ENCODE measurements at regions of chr2 and their contacts with region 1.

Region 1: DNA sequence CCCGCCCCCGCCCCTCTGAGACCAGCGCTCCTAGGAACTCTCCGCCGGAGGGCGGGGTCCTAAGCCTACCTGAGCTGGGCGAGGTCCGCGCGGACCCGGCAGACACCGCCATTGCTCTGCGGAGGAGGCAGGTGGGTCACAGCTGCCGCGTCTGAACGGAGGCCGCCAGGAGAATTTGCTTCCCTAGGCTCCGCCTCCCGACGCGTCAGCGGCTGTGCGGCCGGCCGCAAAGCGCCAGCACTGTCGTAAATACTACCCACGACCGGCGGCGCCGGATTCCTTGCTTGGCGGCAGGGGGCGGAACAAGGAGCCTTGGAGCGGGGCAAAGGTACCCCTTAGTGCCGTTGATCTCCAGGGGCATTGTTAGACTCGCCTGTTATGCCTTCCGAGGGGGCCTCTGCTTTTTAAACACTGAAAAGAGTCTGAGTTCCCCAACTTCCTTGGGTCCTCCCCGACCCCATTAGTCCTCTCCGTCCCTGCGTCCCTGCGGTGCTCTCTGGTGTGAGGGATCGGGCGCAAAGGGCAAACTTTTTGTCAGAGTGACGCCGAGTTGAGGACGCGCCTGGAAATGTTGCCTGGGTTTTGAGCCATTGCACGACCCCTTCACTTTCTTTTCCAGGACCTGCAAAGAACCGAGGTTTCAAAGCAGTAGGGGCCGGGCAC is at the start of gene GGCX:
- DNase-seq: peak; percentile 96 to 98 (median 97)
- ATAC-seq: peak; percentile 95 to 97 (median 96)
- H3K4me3 ChIP-seq: peak within 1 kb of the TSS; percentile 62 to 93 (median 79)
- H3K27ac ChIP-seq: peak within 1 kb of the TSS; percentile 56 to 96 (median 89)
- H3K4me1 ChIP-seq: peaks cover 0 to 32% (median 14%) of the 10 kb centered on the region in 12 donors
- H3K27me3 ChIP-seq: no peaks in the 10 kb centered on the region
- CTCF ChIP-seq: peak in 6 of 12 donors; percentile 12 to 62 (median 30)
- POLR2A ChIP-seq: peak in 1 of 2 donors; percentile 91
- total RNA-seq, gene GGCX: 13.2 to 30.7 (median 20.8) TPM

Region 2: GRCh38 chr2:84999553-84999955 is 561.9 kb before region 1 on chr2:
- intact Hi-C with region 1: no loop called
- DNase-seq: no peak
- ATAC-seq: no peak
- H3K4me3 ChIP-seq: no peak overlapping the region
- H3K27ac ChIP-seq: no peak overlapping the region
- H3K4me1 ChIP-seq: peaks cover 0 to 73% (median 49%) of the 10 kb centered on the region in 12 donors
- H3K27me3 ChIP-seq: no peaks in the 10 kb centered on the region
- CTCF ChIP-seq: no peak
- POLR2A ChIP-seq: no peak

Region 3: GRCh38 chr2:85538486-85539360 is 22.7 kb before region 1 on chr2 and contains the start of gene MAT2A:
- intact Hi-C with region 1: loop called in 1 of 10 experiments (anchors 2 kb)
- DNase-seq: peak; percentile 95 to 96 (median 96)
- ATAC-seq: peak; percentile 87 to 90 (median 89)
- H3K4me3 ChIP-seq: peak within 1 kb of the TSS; percentile 59 to 98 (median 90)
- H3K27ac ChIP-seq: peak within 1 kb of the TSS; percentile 94 to 100 (median 99)
- H3K4me1 ChIP-seq: peaks cover 0 to 55% (median 38%) of the 10 kb centered on the region in 12 donors
- H3K27me3 ChIP-seq: no peaks in the 10 kb centered on the region
- CTCF ChIP-seq: peak; percentile 55 to 91 (median 80)
- POLR2A ChIP-seq: peak in 1 of 2 donors; percentile 98
- total RNA-seq, gene MAT2A: 66.0 to 218 (median 128) TPM

Region 4: DNA sequence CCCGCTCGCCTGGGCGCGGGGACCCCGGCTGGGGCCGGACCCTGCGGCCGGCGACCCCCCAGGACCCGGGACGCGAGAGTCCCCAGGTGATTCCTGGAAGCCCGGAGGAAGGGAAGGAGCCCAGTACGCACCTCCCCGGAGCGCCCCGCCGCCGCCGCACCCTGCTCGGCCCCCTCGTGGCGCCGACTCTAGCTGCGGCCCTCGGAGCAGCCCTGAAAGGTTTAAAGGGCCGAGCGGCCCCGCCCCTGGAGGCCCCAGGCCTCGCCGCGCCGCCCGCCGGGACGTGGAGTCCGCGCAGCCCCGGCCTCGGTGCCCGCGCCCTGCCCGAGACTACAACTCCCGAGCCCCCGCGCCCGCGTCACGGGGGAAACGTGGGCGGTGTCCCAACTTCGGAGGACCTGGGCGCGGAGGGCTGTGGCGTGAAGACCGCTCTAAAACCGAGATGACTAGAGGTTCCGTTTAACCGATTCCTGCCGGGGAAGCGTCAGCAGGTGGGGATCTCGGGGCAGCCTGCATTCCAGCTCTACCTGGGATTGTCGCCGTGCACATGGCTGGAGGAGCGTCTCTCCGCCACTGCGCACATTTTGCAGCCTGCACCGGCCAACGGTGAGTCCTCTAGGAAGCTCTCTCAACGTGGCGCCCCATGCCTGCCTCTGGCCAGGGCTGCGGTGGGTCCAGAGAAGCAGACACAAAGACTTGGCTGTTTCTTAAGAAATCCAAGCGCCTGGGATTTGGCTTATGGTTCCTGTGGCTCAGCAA is 41.2 kb after region 1 on chr2 and contains the start of gene TMEM150A:
- intact Hi-C with region 1: loop called in 4 of 10 experiments (anchors 2 to 5 kb)
- DNase-seq: peak; percentile 95 to 98 (median 96)
- ATAC-seq: peak; percentile 83 to 96 (median 94)
- H3K4me3 ChIP-seq: peak within 1 kb of the TSS; percentile 59 to 87 (median 77)
- H3K27ac ChIP-seq: peak within 1 kb of the TSS; percentile 78 to 93 (median 88)
- H3K4me1 ChIP-seq: peaks cover 0 to 61% (median 48%) of the 10 kb centered on the region in 12 donors
- H3K27me3 ChIP-seq: no peaks in the 10 kb centered on the region
- CTCF ChIP-seq: peak; percentile 12 to 67 (median 48)
- POLR2A ChIP-seq: peak; percentile 56 to 97
- total RNA-seq, gene TMEM150A: 6.4 to 20.8 (median 11.5) TPM

Region 5: DNA sequence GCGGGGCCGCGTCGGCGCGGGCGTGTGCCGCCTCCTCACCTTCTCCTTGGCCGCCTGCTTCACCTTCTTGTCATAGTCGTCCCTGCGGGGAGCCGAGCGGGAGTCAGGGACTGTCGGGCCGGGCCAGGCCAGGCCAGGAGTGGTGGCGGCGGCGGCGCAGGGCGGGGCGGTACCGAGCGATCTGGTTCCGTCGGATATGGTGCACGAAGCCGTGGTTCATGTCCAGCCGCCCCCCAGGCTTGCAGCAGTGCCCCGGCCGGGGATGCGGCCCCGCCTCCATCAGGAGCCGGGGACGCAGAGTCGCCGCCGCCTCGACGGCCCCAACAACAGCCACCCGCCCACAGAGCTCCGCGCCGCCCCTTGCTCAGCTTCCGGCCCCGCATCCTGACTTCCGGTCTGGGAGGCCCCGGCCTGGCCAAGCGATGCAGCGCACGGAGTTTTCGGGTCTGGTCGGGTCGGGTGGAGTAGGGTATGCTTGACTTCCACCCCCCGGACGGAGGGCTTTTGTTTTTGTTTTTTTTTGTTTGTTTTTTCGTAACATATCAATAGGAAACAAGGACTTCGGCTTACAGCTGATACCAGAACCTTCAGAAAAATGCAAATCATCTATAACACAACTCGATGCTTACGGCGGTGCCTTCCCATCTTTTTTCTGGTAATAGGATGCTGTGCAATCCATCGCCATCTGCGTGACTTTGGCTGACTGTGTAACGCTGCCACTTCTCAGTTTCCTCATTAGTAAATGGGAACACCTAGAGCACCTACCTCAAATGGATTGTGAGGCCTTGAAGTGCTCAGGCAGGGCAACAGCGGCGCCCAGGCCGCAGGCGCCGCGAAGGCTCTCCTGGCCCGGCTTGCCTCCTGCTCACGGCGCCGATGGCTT is 50.5 kb after region 1 on chr2 and contains the start of gene C2orf68:
- intact Hi-C with region 1: loop called in 6 of 10 experiments (anchors 1 to 5 kb)
- DNase-seq: peak; percentile 93 to 95 (median 94)
- ATAC-seq: peak; percentile 76 to 87 (median 86)
- H3K4me3 ChIP-seq: peak within 1 kb of the TSS; percentile 79 to 99 (median 94)
- H3K27ac ChIP-seq: peak within 1 kb of the TSS; percentile 78 to 95 (median 88)
- H3K4me1 ChIP-seq: peaks cover 2 to 57% (median 28%) of the 10 kb centered on the region in 12 donors
- H3K27me3 ChIP-seq: no peaks in the 10 kb centered on the region
- CTCF ChIP-seq: no peak
- POLR2A ChIP-seq: peak in 1 of 2 donors; percentile 70
- total RNA-seq, gene C2orf68: 12.0 to 38.2 (median 29.1) TPM

Region 6: DNA sequence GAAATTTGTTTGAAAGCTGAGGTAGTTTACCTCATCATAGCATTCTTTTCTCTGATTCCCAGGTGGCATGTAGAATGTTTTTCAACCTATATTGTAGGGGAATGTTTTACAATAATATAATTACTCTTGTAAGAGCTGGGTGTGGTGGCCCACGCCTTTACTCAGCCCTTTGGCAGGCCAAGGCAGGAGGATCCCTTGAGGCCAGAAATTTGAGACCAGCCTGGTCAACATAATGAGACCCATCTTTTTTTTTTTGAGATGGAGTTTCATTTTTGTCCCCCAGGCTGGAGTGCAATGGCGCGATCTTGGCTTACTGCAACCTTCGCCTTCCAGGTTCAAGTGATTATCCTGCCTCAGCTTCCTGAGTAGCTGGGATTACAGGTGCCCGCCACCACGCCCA is 58.2 kb after region 1 on chr2:
- intact Hi-C with region 1: loop called in 6 of 10 experiments (anchors 1 to 5 kb)
- DNase-seq: no peak
- ATAC-seq: no peak
- H3K4me3 ChIP-seq: no peak overlapping the region
- H3K27ac ChIP-seq: no peak overlapping the region
- H3K4me1 ChIP-seq: peaks cover 3 to 44% (median 24%) of the 10 kb centered on the region in 12 donors
- H3K27me3 ChIP-seq: no peaks in the 10 kb centered on the region
- CTCF ChIP-seq: no peak
- POLR2A ChIP-seq: no peak

Measured in heart left ventricle (tissue), 16 donors.